MCF 10A (cell line): ENCODE measurements at regions of chr4 and their contacts with region 1.

Region 1: DNA sequence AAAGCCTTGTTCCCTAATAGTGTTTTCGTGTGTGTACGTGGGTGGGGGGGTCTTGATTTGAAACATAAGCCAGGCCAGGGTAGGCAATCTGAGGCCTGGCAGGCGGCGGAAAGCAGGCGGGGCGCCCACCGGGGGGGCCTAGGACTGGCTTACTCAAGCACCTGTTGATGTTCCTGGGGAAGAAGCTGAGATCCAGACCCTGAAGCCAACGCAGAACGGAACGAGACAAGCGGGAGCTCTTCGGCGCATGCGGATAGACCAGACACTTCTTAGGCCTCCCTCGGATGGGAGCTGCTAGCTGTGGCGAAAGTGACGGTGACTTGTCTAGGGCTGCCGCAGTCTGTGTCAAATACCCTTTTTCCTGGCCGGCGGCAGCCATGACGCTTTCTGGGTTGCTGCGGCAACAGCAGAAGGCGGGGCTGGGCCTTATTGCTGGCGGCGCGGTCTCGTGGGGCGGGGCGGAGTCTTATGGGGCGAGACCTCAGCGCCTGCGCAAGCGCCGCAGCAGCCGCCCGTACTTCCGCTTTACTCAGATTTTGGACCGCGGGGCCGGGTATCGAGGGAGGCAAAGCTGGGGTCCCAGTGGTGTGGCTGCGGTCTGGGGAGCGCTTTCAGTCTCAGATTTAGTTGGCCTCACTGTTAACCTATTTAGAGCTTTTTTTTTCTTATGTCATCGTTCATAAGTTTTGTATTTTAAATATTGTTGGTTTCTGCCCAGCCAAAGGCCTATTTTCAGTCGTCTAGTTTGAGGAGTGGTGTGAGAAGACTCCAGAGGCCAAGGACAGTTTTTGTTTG is at the start of gene SPATA4:
- DNase-seq: peak; percentile 87
- H3K4me3 Mint-ChIP-seq: peak within 1 kb of the TSS; percentile 89
- H3K27ac Mint-ChIP-seq: peak within 1 kb of the TSS; percentile 98
- H3K4me1 Mint-ChIP-seq: peaks cover 7% of the 10 kb centered on the region
- H3K27me3 Mint-ChIP-seq: no peaks in the 10 kb centered on the region
- CTCF ChIP-seq: no peak
- total RNA-seq, gene SPATA4: 0.21 and 0.44 TPM in 2 replicates

Region 2: DNA sequence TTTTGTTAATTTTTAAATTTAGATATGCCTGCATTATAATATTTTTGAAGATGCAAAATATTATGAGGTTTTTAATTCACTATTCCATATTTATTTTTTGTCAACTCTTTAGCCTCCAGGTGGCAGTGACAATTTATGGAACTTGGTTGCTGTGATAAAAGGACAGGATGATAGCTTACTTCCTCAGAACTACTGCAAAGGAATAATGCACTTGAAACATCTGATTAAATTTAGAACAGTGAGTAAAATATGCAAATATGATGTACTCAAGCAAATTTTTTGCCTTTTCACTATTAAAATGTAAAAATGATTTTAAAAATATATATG is 45.1 kb before region 1 on chr4:
- CTCF ChIA-PET with region 1: interaction called, 6 read pairs
- POLR2A ChIA-PET with region 1: no interaction called
- intact Hi-C with region 1: loop called (anchors 2 kb)
- DNase-seq: peak; percentile 48
- H3K4me3 Mint-ChIP-seq: no peak overlapping the region
- H3K27ac Mint-ChIP-seq: no peak overlapping the region
- H3K4me1 Mint-ChIP-seq: no peaks in the 10 kb centered on the region
- H3K27me3 Mint-ChIP-seq: no peaks in the 10 kb centered on the region
- CTCF ChIP-seq: peak; percentile 37

Region 3: DNA sequence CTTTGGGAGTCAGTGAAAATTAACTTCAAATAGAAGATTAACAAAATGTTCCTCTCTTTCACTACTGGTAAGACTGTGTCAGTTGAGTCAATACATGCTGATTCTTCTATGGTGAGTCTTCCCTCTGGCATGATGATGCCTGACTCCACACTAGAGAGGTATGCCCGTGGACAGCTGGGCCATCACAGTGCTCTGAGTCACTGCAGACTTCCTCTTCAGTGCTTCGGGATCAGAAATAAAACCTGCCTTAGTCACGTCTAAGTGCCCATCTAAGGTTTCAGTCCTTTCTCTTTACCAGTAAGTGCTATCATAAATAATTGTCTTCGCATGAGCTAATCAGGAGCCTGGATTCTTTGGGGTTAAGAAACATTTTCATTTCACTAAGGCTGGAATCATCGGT is 75.3 kb after region 1 on chr4:
- CTCF ChIA-PET with region 1: interaction called, 6 read pairs
- POLR2A ChIA-PET with region 1: interaction called, 5 read pairs
- intact Hi-C with region 1: loop called (anchors 1 kb)
- DNase-seq: peak; percentile 93
- H3K4me3 Mint-ChIP-seq: no peak overlapping the region
- H3K27ac Mint-ChIP-seq: no peak overlapping the region
- H3K4me1 Mint-ChIP-seq: peaks cover 18% of the 10 kb centered on the region
- H3K27me3 Mint-ChIP-seq: no peaks in the 10 kb centered on the region
- CTCF ChIP-seq: no peak

Region 4: DNA sequence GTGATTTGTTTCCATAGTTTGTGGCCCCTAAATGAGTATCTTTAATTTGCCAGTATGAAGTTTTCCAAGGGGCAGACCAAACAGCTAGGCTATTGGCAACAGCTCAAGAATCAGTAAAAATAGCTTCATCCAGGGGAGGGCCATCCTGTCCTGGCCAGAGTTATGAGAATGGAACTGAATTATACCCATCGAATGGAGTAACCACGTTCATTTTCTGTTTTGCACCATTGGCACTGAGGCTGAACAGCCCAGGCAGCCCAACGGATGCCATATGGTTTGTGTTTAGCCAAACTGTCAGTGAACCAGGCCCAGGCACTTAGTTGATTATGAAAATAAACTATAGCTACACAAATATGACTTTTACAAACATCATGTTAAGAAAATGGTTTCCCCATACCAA is 91.3 kb after region 1 on chr4:
- CTCF ChIA-PET with region 1: no interaction called
- POLR2A ChIA-PET with region 1: no interaction called
- intact Hi-C with region 1: no loop called
- DNase-seq: no peak
- H3K4me3 Mint-ChIP-seq: no peak overlapping the region
- H3K27ac Mint-ChIP-seq: no peak overlapping the region
- H3K4me1 Mint-ChIP-seq: no peaks in the 10 kb centered on the region
- H3K27me3 Mint-ChIP-seq: no peaks in the 10 kb centered on the region
- CTCF ChIP-seq: no peak